IMR-90 (cell line): ENCODE measurements at regions of chr18 and their contacts with region 1.

Region 1: DNA sequence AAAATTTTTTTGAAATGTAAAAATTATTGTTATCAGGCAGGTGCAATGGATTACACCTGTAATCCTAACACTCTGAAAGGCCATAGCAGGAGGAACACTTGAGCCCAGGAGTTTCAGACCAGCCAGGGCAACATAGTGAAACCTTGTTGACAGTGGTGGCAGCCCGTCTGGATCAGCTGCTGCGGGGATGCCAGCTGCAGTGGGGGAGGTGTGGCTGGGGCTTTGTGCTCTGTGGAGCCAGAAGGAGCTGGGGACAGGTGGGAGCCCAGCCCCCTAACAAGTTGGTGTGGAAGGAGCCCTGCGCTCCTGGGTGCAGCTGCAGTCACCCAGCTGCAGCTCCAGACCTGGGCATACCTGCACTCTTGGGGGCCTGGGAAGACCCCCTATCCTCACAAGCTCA is 182.4 kb upstream of the MC4R start:
- DNase-seq: no peak
- ATAC-seq: no peak
- H3K4me3 ChIP-seq: no peak overlapping the region
- H3K27ac ChIP-seq: no peak overlapping the region
- H3K4me1 ChIP-seq: no peaks in the 10 kb centered on the region
- H3K27me3 ChIP-seq: no peaks in the 10 kb centered on the region
- CTCF ChIP-seq: no peak
- POLR2A ChIP-seq: no peak
- RAD21 ChIP-seq: no peak

Region 2: DNA sequence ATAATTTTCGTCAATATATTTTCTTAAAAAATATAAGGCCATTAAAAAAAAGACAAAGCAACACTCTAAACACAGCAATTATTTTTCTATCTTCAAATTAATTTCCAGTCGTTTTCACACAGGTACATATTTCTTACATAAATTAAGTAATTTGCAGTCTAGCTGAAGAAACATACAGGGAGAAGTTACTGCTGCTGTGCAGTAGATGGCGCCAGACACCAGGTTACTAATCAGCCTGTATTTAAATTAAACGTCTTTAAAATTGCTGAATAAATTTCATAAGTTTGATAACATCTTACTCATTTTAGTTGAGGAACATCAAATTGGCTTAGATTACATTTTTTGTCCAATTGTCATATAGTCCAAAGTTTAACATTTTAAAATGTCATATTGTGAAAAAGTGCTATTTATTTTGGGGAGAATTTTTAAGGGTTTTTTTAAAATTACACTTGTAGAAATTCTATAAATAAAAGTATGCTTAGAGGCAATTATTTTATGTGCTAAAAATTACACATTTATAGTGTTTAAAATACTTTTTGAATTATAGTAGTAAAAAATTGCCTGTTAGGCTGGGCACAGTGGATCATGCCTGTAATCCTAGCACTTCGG is 566.8 kb before region 1 on chr18:
- CTCF ChIA-PET with region 1: interaction called, 17 read pairs
- POLR2A ChIA-PET with region 1: no interaction called
- dilution Hi-C with region 1: loop called (anchors 25 kb)
- in situ Hi-C with region 1: loop called (anchors 5 kb)
- intact Hi-C with region 1: no loop called
- DNase-seq: peak; percentile 74
- ATAC-seq: peak; percentile 77
- H3K4me3 ChIP-seq: no peak overlapping the region
- H3K27ac ChIP-seq: no peak overlapping the region
- H3K4me1 ChIP-seq: no peaks in the 10 kb centered on the region
- H3K27me3 ChIP-seq: peaks cover 19% of the 10 kb centered on the region
- CTCF ChIP-seq: peak; percentile 98
- POLR2A ChIP-seq: no peak
- RAD21 ChIP-seq: peak; percentile 96